Calu3 (cell line): ENCODE measurements at regions of chr2 and their contacts with region 1.

Region 1: GRCh38 chr2:217166241-217166850 is 306.5 kb upstream of the TNP1 start:
- DNase-seq: peak; percentile 25
- H3K4me3 Mint-ChIP-seq: no peak overlapping the region
- H3K27ac Mint-ChIP-seq: peak overlapping the region; percentile 47
- H3K4me1 Mint-ChIP-seq: peaks cover 31% of the 10 kb centered on the region
- H3K27me3 Mint-ChIP-seq: no peaks in the 10 kb centered on the region
- CTCF ChIP-seq: peak; percentile 43

Region 2: GRCh38 chr2:216680951-216681629 is 485.3 kb before region 1 on chr2:
- CTCF ChIA-PET with region 1: interaction called, 14 read pairs
- intact Hi-C with region 1: loop called (anchors 1 kb)
- DNase-seq: no peak
- H3K4me3 Mint-ChIP-seq: no peak overlapping the region
- H3K27ac Mint-ChIP-seq: no peak overlapping the region
- H3K4me1 Mint-ChIP-seq: peaks cover 28% of the 10 kb centered on the region
- H3K27me3 Mint-ChIP-seq: peaks cover 8% of the 10 kb centered on the region
- CTCF ChIP-seq: no peak

Region 3: DNA sequence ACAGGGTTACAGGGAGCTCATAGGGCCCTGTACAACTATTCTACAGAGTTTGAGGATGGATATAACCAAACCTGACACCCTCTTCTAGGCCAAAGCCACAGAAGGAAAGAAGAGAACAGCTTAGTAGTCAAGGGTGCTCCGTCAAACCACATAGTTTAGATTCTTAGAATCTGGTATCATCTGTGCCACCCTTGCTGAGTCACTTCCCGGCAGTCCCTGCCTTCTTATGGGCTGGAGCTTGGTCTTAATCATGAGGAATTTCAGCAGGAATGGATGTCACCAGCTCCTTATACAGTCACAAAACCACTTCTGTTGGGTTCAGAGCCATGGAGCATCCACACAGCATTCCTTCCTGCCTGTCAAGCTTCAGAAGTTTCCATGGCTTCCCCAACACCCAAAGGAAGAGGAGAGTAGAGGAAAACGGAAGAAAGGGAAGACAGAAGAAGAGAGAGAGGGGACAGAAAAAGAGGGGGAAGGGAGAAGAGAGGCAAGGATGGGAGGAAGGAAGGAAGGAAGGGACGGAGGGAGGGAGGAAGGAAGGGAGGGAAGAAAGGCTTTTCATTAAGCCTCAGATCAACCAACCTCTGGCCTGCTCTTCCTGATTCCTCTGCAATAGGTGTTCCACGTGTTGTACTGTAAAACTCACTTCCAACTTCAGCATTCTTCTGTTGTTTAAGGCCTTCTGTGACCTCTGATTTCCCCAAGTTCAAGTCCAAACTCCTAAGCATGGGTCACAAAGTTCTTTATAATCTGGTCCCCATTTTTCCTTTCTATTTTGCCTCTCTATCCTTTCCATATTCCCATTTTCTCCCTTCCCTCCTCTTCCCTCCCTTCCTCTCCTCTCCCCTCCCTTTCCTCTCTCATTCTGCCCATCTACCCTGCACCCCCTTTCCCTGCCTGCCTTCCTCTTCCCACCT is 60.4 kb before region 1 on chr2:
- CTCF ChIA-PET with region 1: interaction called, 12 read pairs
- intact Hi-C with region 1: loop called (anchors 1 kb)
- DNase-seq: peak; percentile 66
- H3K4me3 Mint-ChIP-seq: no peak overlapping the region
- H3K27ac Mint-ChIP-seq: peak overlapping the region; percentile 90
- H3K4me1 Mint-ChIP-seq: peaks cover 65% of the 10 kb centered on the region
- H3K27me3 Mint-ChIP-seq: no peaks in the 10 kb centered on the region
- CTCF ChIP-seq: no peak

Region 4: DNA sequence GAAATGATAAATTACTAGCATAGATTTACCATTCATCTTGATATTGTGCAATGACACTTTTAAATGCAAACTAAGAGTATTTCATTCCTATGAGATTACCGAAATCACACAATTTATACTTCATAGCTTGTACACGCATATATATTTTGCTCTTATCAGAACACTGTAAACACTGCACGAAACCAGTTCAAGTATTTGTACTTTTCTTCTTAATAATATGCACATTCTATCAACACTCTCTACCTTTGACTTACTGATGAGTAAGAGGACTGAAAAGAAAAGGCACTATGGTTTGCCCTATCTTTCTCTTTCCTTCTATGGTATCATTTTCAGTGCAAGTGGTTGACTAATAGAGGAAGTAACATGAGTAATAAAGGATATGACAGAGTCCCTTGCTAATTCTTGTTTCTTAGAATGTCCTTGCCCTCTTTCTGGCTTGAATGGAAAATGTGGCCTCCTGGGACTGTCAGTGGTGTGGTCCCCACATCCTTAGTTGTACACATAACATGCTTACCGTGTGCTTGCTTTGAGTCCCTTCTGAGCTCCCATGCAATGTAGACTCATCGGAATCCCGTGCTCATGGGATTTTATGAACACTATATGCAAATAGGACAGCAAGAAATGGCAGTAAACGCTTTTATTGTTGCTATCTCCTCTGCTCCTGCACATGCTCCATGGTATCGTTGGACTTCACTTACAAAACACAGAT is 57.0 kb after region 1 on chr2:
- CTCF ChIA-PET with region 1: interaction called, 6 read pairs
- intact Hi-C with region 1: loop called (anchors 5 kb)
- DNase-seq: peak; percentile 56
- H3K4me3 Mint-ChIP-seq: no peak overlapping the region
- H3K27ac Mint-ChIP-seq: peak overlapping the region; percentile 86
- H3K4me1 Mint-ChIP-seq: peaks cover 42% of the 10 kb centered on the region
- H3K27me3 Mint-ChIP-seq: no peaks in the 10 kb centered on the region
- CTCF ChIP-seq: no peak

Region 5: GRCh38 chr2:217510771-217511291 is 344.5 kb after region 1 on chr2:
- CTCF ChIA-PET with region 1: interaction called, 9 read pairs
- intact Hi-C with region 1: loop called (anchors 5 kb)
- DNase-seq: peak; percentile 76
- H3K4me3 Mint-ChIP-seq: no peak overlapping the region
- H3K27ac Mint-ChIP-seq: peak overlapping the region; percentile 90
- H3K4me1 Mint-ChIP-seq: peaks cover 39% of the 10 kb centered on the region
- H3K27me3 Mint-ChIP-seq: no peaks in the 10 kb centered on the region
- CTCF ChIP-seq: peak; percentile 79